ENCODE measurements at regions of chr10 and their contacts with region 1.

Region 1: DNA sequence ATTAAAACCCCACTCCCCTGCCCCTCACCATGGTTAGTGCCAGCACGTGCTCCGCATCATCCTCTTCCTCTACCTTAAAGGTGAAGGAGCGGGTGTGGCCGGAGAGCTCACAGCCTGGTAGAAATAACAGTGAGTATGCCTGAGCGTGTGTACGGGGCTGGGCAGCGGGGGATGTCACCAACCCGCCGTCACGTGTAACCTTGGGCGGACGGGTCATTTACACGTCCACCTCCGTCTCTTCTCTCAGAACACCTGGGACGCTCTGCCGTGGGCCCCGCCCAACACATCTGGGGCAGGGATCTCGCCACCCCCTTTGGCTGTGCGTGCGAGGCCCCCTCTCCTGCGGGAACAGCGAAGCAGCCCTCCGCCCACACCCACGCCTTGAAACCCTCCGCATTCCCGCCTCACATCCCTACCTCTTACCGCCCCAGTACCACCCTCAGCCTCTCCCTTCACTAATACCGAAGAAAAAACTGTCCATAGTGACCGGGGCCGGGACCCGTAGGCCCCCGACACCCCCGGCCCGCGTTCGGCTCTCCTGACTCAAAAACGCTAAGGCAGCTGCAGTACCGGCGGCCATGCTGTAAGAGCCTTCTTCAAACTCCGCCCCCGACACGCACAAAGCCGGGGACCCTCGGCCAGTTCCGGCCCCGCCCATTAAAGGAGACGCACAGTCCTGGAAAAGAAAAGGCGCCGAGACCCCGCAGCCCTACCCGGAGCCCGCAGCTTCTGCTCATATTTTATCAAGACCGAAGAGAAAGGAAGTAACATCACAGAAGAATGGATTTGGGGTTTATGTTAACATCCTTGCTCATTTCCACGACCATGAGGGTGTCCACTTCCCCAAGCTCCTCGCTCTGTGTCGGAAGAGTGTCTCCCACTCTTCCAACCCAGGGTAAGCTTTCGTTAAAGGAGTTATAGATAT is at the start of gene NPM3:
- DNase-seq: no peak
- ATAC-seq: peak; percentile 76
- H3K4me3 ChIP-seq: peak within 1 kb of the TSS; percentile 85
- H3K27ac ChIP-seq: peak within 1 kb of the TSS; percentile 71
- H3K4me1 ChIP-seq: peaks cover 41% of the 10 kb centered on the region
- H3K27me3 ChIP-seq: no peaks in the 10 kb centered on the region
- CTCF ChIP-seq: no peak
- EP300 ChIP-seq: no peak
- POLR2A ChIP-seq: peak; percentile 76
- RAD21 ChIP-seq: no peak
- polyA plus RNA-seq, gene NPM3: 19.7 to 49.6 TPM

Region 2: GRCh38 chr10:101214446-101215396 is 568.4 kb before region 1 on chr10:
- CTCF ChIA-PET with region 1: interaction called, 6 read pairs
- POLR2A ChIA-PET with region 1: no interaction called
- RAD21 ChIA-PET with region 1: interaction called, 3 read pairs
- SMC1A ChIA-PET with region 1: interaction called, 3 read pairs
- in situ Hi-C with region 1: loop called (anchors 5 kb)
- intact Hi-C with region 1: loop called (anchors 2 kb)
- DNase-seq: no peak
- ATAC-seq: peak; percentile 94
- H3K4me3 ChIP-seq: no peak overlapping the region
- H3K27ac ChIP-seq: no peak overlapping the region
- H3K4me1 ChIP-seq: no peaks in the 10 kb centered on the region; the same call in 1 of the 2 replicates
- H3K27me3 ChIP-seq: peaks cover 15 to 22% of the 10 kb centered on the region in 2 experiments
- CTCF ChIP-seq: peak; percentile 76 to 91 (median 78)
- EP300 ChIP-seq: no peak
- POLR2A ChIP-seq: no peak
- RAD21 ChIP-seq: peak; percentile 71

Region 3: DNA sequence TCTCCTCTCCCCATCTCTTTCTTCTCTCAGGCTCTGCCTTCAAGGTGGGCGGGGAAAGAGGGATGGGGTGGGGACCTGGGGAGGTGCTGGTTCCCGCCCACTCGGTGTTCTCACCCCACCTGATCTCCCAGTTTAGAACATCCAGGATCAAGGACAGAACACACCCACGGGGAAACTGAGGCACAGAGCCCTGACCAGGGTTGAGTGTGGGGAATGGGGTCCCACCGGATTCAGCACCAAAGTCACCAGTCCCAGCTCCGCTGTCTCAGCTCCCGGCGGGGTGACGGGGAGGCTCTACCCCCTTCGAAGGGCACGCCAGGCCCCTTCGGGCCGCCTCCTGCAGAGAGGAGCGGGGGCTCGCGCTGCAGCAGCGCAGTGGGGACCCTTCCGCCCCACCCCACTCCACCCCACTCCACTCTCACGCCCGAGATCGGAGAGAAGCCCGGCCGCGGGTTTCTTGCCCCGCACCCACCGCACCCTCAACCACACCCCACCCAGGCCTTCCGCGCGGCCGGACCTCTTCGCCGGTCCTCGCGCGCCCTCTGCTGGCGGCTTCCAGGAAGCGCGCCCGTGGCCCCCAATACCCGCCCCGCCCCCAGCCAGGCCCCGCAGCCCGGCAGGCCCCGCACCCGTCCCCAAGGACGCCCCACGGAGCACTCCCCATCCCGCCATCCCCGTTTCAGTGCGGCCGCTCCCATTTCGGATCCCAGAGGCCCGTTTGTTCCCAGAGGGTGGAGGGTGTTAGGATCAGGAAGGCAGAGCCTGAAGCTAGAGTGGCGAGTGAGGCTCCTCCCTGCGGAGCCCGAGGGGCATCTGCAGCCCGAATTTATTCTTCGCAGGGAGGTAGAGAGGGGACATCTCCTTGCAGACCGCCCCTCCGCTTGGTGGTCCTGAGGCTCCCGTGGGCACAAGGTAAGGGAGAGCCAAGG is 213.0 kb before region 1 on chr10:
- CTCF ChIA-PET with region 1: interaction called, 13 read pairs
- POLR2A ChIA-PET with region 1: no interaction called
- RAD21 ChIA-PET with region 1: interaction called, 12 read pairs
- SMC1A ChIA-PET with region 1: interaction called, 7 read pairs
- in situ Hi-C with region 1: no loop called
- intact Hi-C with region 1: no loop called
- DNase-seq: peak; percentile 19
- ATAC-seq: peak; percentile 92
- H3K4me3 ChIP-seq: peak overlapping the region; percentile 78
- H3K27ac ChIP-seq: no peak overlapping the region
- H3K4me1 ChIP-seq: peaks cover 5% of the 10 kb centered on the region; the same call in 1 of the 2 replicates
- H3K27me3 ChIP-seq: peaks cover 0 to 4% of the 10 kb centered on the region in 2 experiments; a peak in 1 of 4 replicates
- CTCF ChIP-seq: peak; percentile 47 to 88 (median 81)
- EP300 ChIP-seq: no peak
- POLR2A ChIP-seq: no peak; the same call in none of the 2 replicates
- RAD21 ChIP-seq: peak; percentile 78

Region 4: GRCh38 chr10:101602761-101603398 is 180.2 kb before region 1 on chr10:
- CTCF ChIA-PET with region 1: interaction called, 334 read pairs
- POLR2A ChIA-PET with region 1: interaction called, 6 read pairs
- RAD21 ChIA-PET with region 1: interaction called, 172 read pairs
- SMC1A ChIA-PET with region 1: interaction called, 139 read pairs
- in situ Hi-C with region 1: loop called (anchors 5 kb)
- intact Hi-C with region 1: loop called (anchors 1 kb)
- DNase-seq: peak; percentile 40
- ATAC-seq: peak; percentile 100
- H3K4me3 ChIP-seq: no peak overlapping the region
- H3K27ac ChIP-seq: no peak overlapping the region
- H3K4me1 ChIP-seq: no peaks in the 10 kb centered on the region
- H3K27me3 ChIP-seq: no peaks in the 10 kb centered on the region
- CTCF ChIP-seq: peak; percentile 93 to 98 (median 96); a peak in 5 of 6 replicates
- EP300 ChIP-seq: no peak
- POLR2A ChIP-seq: no peak
- RAD21 ChIP-seq: peak; percentile 94

Region 5: DNA sequence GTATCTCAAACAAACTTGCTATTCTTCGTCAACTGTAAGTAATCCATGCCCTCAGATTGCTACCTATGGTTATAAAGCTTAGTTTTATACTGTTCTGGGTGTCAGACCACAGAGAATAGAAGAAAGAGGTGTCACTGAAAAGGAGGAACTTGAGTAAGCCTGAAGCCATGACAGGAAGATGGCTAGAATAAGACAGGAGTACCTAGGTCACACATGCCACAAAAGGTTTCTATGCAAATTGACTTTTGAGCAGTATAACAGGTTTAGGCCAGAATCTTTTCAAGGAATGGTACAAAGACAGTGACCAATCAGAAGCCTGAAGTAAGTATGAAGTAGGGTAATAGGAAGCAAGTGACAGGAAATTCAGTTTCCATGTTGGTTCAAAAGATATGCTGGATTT is 111.6 kb before region 1 on chr10:
- CTCF ChIA-PET with region 1: interaction called, 13 read pairs
- POLR2A ChIA-PET with region 1: no interaction called
- RAD21 ChIA-PET with region 1: interaction called, 3 read pairs
- SMC1A ChIA-PET with region 1: interaction called, 9 read pairs
- in situ Hi-C with region 1: no loop called
- intact Hi-C with region 1: no loop called
- DNase-seq: peak; percentile 60
- ATAC-seq: peak; percentile 91
- H3K4me3 ChIP-seq: no peak overlapping the region
- H3K27ac ChIP-seq: peak overlapping the region; percentile 78
- H3K4me1 ChIP-seq: peaks cover 26% of the 10 kb centered on the region
- H3K27me3 ChIP-seq: no peaks in the 10 kb centered on the region
- CTCF ChIP-seq: no peak
- EP300 ChIP-seq: no peak
- POLR2A ChIP-seq: no peak
- RAD21 ChIP-seq: no peak

Region 6: GRCh38 chr10:101812606-101813005 is 29.5 kb after region 1 on chr10:
- CTCF ChIA-PET with region 1: interaction called, 15 read pairs
- POLR2A ChIA-PET with region 1: interaction called, 12 read pairs
- RAD21 ChIA-PET with region 1: interaction called, 4 read pairs
- SMC1A ChIA-PET with region 1: interaction called, 5 read pairs
- in situ Hi-C with region 1: no loop called
- intact Hi-C with region 1: no loop called
- DNase-seq: no peak
- ATAC-seq: no peak
- H3K4me3 ChIP-seq: 0 out of 2 replicates have a peak overlapping the region, but pooled peaks have one; percentile 2
- H3K27ac ChIP-seq: no peak overlapping the region
- H3K4me1 ChIP-seq: peaks cover 6% of the 10 kb centered on the region; the same call in 1 of the 2 replicates
- H3K27me3 ChIP-seq: no peaks in the 10 kb centered on the region
- CTCF ChIP-seq: no peak
- EP300 ChIP-seq: no peak
- POLR2A ChIP-seq: no peak
- RAD21 ChIP-seq: no peak

Region 7: DNA sequence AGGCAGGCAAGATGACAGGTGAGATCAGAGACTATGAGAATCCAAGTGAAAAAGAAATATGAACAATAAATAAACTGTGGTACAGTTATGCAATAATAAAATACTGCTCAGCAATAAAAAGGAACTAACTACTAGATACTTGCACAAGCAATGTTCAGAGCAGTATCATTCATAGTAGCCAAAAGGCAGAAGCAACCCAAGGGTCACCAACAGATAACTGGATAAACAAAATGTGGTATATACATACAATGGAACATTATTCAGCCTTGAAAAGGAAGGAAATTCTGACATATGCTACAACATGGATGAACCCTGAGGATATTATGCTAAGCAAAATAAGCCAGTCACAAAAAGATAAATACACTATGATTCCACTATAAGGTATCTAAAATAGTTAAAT is 137.5 kb after region 1 on chr10:
- CTCF ChIA-PET with region 1: no interaction called
- POLR2A ChIA-PET with region 1: no interaction called
- RAD21 ChIA-PET with region 1: no interaction called
- SMC1A ChIA-PET with region 1: no interaction called
- in situ Hi-C with region 1: no loop called
- intact Hi-C with region 1: no loop called
- DNase-seq: no peak
- ATAC-seq: no peak
- H3K4me3 ChIP-seq: no peak overlapping the region
- H3K27ac ChIP-seq: no peak overlapping the region
- H3K4me1 ChIP-seq: peaks cover 3% of the 10 kb centered on the region; the same call in 1 of the 2 replicates
- H3K27me3 ChIP-seq: no peaks in the 10 kb centered on the region
- CTCF ChIP-seq: no peak
- EP300 ChIP-seq: no peak
- POLR2A ChIP-seq: no peak
- RAD21 ChIP-seq: no peak

Region 8: GRCh38 chr10:101952191-101952590 is 169.1 kb after region 1 on chr10:
- CTCF ChIA-PET with region 1: no interaction called
- POLR2A ChIA-PET with region 1: no interaction called
- RAD21 ChIA-PET with region 1: no interaction called
- SMC1A ChIA-PET with region 1: no interaction called
- in situ Hi-C with region 1: no loop called
- intact Hi-C with region 1: no loop called
- DNase-seq: no peak
- ATAC-seq: no peak
- H3K4me3 ChIP-seq: no peak overlapping the region
- H3K27ac ChIP-seq: no peak overlapping the region
- H3K4me1 ChIP-seq: 0 out of 2 replicates have a peak, but pooled peaks cover 6% of the 10 kb centered on the region
- H3K27me3 ChIP-seq: no peaks in the 10 kb centered on the region
- CTCF ChIP-seq: no peak
- EP300 ChIP-seq: no peak
- POLR2A ChIP-seq: no peak
- RAD21 ChIP-seq: no peak

Measured in GM12878 (cell line).